ENCODE measurements at regions of chrX and their contacts with region 1.

Region 1: GRCh38 chrX:19915754-19916153 is 28.4 kb upstream of the SH3KBP1 start:
- DNase-seq: no peak
- H3K4me3 ChIP-seq: no peak overlapping the region
- H3K27ac ChIP-seq: no peak overlapping the region
- H3K4me1 ChIP-seq: no peaks in the 10 kb centered on the region
- H3K27me3 ChIP-seq: no peaks in the 10 kb centered on the region
- CTCF ChIP-seq: no peak
- EP300 ChIP-seq: no peak
- POLR2A ChIP-seq: no peak

Region 2: GRCh38 chrX:18674788-18675735 is 1240.7 kb before region 1 on chrX:
- in situ Hi-C with region 1: no loop called
- intact Hi-C with region 1: loop called (anchors 5 kb)
- DNase-seq: peak; percentile 78
- H3K4me3 ChIP-seq: peak overlapping the region; percentile 56 to 77 (median 66)
- H3K27ac ChIP-seq: peak overlapping the region; percentile 82 to 93 (median 88)
- H3K4me1 ChIP-seq: no peaks in the 10 kb centered on the region
- H3K27me3 ChIP-seq: no peaks in the 10 kb centered on the region
- CTCF ChIP-seq: no peak
- EP300 ChIP-seq: no peak
- POLR2A ChIP-seq: peak; percentile 30

Region 3: DNA sequence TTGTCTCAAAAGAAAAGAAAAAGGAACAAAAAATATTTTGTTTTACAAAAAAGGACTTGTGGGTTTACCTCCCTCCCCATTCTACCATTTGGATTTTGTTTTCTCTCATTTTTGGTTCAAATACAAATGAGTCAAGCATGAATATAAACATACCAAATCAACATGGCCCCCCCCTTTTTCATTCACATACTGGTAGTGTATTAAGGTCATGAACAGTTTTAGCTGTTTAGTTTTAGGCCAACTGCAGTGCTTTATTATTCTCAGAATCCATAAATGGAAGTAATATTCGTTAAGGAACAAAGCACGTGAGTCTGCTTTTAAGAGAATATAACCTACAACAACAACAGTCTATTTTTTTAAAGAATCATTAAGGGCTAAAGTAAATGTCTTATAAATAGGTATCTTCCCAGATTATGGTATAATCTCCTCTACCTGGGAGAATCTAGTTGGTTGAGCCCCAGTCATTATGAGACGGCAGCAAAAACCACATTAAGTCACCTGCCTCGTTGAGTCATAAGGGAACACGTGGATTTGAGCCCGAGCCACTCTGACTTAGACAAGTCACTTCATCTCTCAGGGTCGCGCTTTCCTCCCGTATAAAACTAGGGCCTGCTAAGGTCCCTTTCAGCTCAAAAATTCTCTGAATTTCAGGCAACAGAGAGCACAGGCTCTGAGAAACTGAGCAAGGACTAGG is 48.4 kb after region 1 on chrX:
- in situ Hi-C with region 1: no loop called
- intact Hi-C with region 1: no loop called
- DNase-seq: no peak
- H3K4me3 ChIP-seq: no peak overlapping the region
- H3K27ac ChIP-seq: no peak overlapping the region
- H3K4me1 ChIP-seq: no peaks in the 10 kb centered on the region
- H3K27me3 ChIP-seq: no peaks in the 10 kb centered on the region
- CTCF ChIP-seq: no peak
- EP300 ChIP-seq: no peak
- POLR2A ChIP-seq: no peak